ENCODE measurements at regions of chr4 and their contacts with region 1.

Region 1: GRCh38 chr4:35250761-35251160 is 993.6 kb downstream of the ARAP2 start:
- DNase-seq: no peak
- H3K4me3 ChIP-seq: no peak overlapping the region
- H3K4me3 Mint-ChIP-seq: no peak overlapping the region
- H3K27ac ChIP-seq: no peak overlapping the region
- H3K27ac Mint-ChIP-seq: no peak overlapping the region
- H3K4me1 ChIP-seq: no peaks in the 10 kb centered on the region
- H3K4me1 Mint-ChIP-seq: no peaks in the 10 kb centered on the region
- H3K27me3 ChIP-seq: no peaks in the 10 kb centered on the region
- H3K27me3 Mint-ChIP-seq: no peaks in the 10 kb centered on the region

Region 2: GRCh38 chr4:34920032-34920431 is 330.7 kb before region 1 on chr4:
- CTCF ChIA-PET with region 1: no interaction called
- POLR2A ChIA-PET with region 1: no interaction called
- intact Hi-C with region 1: no loop called
- DNase-seq: no peak
- H3K4me3 ChIP-seq: no peak overlapping the region
- H3K4me3 Mint-ChIP-seq: no peak overlapping the region
- H3K27ac ChIP-seq: no peak overlapping the region
- H3K27ac Mint-ChIP-seq: no peak overlapping the region
- H3K4me1 ChIP-seq: no peaks in the 10 kb centered on the region
- H3K4me1 Mint-ChIP-seq: no peaks in the 10 kb centered on the region
- H3K27me3 ChIP-seq: no peaks in the 10 kb centered on the region
- H3K27me3 Mint-ChIP-seq: no peaks in the 10 kb centered on the region

Region 3: DNA sequence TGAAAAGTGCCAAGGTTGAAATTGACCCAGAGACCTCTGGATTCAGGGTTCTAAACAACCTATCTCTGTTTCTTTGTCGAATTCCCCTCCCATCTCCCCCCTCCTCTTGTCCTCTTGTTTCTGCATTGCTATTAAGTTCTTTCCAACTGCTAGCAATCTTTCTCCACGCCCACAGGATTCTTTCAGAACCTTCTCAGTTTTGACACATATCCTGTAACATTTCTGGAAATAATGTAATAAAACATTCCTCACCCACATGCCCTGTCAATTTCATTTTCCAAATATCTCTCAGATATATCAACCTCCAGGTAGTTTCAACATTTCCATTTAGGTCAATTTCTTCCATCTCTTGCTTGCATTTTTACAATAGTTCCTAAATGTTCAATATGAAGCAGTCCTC is 112.3 kb before region 1 on chr4:
- CTCF ChIA-PET with region 1: no interaction called
- POLR2A ChIA-PET with region 1: no interaction called
- intact Hi-C with region 1: no loop called
- DNase-seq: no peak
- H3K4me3 ChIP-seq: no peak overlapping the region
- H3K4me3 Mint-ChIP-seq: no peak overlapping the region
- H3K27ac ChIP-seq: no peak overlapping the region
- H3K27ac Mint-ChIP-seq: no peak overlapping the region
- H3K4me1 ChIP-seq: no peaks in the 10 kb centered on the region
- H3K4me1 Mint-ChIP-seq: no peaks in the 10 kb centered on the region
- H3K27me3 ChIP-seq: no peaks in the 10 kb centered on the region
- H3K27me3 Mint-ChIP-seq: no peaks in the 10 kb centered on the region

Region 4: DNA sequence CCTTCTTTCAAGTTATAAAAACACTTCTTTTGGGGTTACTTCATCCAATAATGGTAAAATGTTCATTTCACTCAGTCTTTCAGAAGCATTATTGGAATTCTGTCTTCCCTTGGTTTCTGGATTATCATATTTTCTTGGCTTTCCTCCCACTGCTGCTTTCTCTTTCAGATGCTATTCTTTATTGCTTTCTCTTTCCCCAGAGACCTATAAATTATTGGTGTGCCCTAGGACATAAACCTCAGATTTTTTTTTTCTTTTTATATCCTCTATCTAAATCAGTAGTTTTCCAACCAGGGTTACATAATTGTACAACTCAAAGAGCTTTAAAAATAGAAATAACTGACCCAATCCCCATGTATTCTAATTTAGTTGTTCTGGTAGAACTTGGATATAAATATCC is 12.0 kb before region 1 on chr4:
- CTCF ChIA-PET with region 1: no interaction called
- POLR2A ChIA-PET with region 1: no interaction called
- intact Hi-C with region 1: loop called (anchors 1 kb)
- DNase-seq: no peak
- H3K4me3 ChIP-seq: no peak overlapping the region
- H3K4me3 Mint-ChIP-seq: no peak overlapping the region
- H3K27ac ChIP-seq: no peak overlapping the region
- H3K27ac Mint-ChIP-seq: no peak overlapping the region
- H3K4me1 ChIP-seq: no peaks in the 10 kb centered on the region
- H3K4me1 Mint-ChIP-seq: no peaks in the 10 kb centered on the region
- H3K27me3 ChIP-seq: no peaks in the 10 kb centered on the region
- H3K27me3 Mint-ChIP-seq: no peaks in the 10 kb centered on the region

Region 5: DNA sequence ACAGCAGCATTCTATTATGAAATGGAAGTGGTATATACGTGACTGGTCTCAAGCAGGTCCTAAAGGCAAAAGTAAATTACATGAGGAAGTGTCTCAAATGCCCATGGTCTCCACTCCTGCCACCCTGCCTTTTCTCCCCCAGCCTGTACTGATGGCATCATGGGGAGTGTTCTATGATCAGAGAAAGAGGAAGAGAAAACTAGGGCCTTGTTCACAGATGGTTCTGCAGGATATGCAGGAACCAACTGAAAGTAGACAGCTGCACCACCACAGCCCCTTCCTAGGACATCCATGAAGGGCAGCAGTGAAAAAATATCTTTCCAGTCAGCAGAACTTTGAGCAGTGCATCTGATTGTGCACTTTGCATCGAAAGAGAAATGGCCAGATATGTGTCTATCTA is 92.1 kb after region 1 on chr4:
- CTCF ChIA-PET with region 1: no interaction called
- POLR2A ChIA-PET with region 1: no interaction called
- intact Hi-C with region 1: no loop called
- DNase-seq: no peak
- H3K4me3 ChIP-seq: no peak overlapping the region
- H3K4me3 Mint-ChIP-seq: no peak overlapping the region
- H3K27ac ChIP-seq: no peak overlapping the region
- H3K27ac Mint-ChIP-seq: no peak overlapping the region
- H3K4me1 ChIP-seq: no peaks in the 10 kb centered on the region
- H3K4me1 Mint-ChIP-seq: no peaks in the 10 kb centered on the region
- H3K27me3 ChIP-seq: no peaks in the 10 kb centered on the region
- H3K27me3 Mint-ChIP-seq: no peaks in the 10 kb centered on the region

Measured in CD4-positive, alpha-beta memory T cell (primary cell).